Right cardiac atrium (tissue), 5 donors: ENCODE measurements at regions of chr10 and their contacts with region 1.

Region 1: DNA sequence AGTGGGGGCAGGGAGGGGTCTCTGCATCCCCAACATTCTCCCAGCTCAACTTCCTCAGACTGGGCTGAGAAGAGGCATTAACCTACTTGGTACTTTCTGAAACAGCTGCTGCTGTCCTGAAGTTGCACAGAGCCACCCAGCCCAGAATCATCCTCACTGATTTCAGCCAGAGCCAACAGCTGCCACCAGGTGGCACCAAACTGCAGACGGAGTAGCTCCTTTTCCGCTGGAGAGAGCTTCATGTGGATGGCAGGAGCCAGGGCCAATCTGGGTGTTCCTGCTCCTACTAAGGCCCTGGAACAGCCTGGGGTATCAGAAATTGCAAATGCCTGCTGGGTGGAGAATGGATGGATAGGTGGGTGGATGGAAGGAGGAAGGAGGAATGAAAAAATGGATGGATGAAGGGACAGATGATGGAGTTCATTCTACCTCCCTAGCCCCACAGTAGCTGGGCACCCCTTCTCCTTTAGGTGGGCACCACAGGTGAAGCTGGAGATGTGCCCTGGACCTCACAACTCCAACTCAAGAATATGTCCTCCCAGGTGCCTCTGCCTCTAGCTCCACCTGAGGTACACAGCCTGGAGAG is 11.8 kb upstream of the DRGX start:
- DNase-seq: peak; percentile 73 to 92 (median 90)
- ATAC-seq: peak in 1 of 2 donors; percentile 67
- H3K4me3 ChIP-seq: no peak overlapping the region
- H3K27ac ChIP-seq: no peak overlapping the region
- H3K4me1 ChIP-seq: no peaks in the 10 kb centered on the region
- H3K27me3 ChIP-seq: no peaks in the 10 kb centered on the region

Region 2: DNA sequence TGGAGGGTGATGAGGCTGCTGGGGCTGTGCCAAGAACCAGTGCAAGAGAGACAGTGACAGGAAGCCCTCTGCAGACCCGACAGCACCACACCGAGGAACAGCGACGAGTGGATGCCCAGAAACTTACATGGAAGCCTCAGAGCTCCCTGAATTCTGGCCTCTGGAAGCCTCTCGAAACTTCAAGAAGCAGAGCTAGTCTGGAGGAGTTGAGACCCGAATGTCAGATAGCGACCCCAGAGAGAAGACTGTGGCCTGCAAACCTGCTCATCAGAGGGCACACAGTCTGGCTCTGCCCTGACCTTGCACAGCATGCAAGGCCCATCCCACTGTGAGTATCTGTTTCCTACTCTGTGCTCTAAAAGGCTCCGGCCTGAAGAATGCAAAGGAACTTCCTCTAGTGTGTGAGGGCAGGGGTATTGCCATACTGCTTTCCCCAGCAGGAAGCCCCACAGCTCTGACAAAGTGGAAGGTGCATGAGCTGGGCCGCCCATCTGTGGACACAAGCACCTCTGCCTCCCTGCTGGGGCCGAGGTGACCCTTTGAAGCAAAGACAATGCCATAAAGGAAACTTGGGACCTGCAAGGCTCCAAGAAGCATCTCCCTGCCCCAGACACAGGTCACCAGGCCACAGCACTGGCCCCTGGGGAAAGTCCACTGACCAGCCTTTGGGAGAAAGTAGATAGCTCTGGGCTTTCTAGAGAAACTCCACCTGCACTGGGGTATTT is 119.1 kb before region 1 on chr10:
- intact Hi-C with region 1: no loop called
- DNase-seq: peak in 2 of 3 donors; percentile 73
- ATAC-seq: peak in 1 of 2 donors; percentile 36
- H3K4me3 ChIP-seq: no peak overlapping the region
- H3K27ac ChIP-seq: no peak overlapping the region
- H3K4me1 ChIP-seq: peaks cover 6% of the 10 kb centered on the region
- H3K27me3 ChIP-seq: no peaks in the 10 kb centered on the region

Region 3: GRCh38 chr10:49465736-49466135 is 58.1 kb after region 1 on chr10:
- intact Hi-C with region 1: loop called in 1 of 4 experiments (anchors 10 kb)
- DNase-seq: no peak
- ATAC-seq: no peak
- H3K4me3 ChIP-seq: no peak overlapping the region
- H3K27ac ChIP-seq: no peak overlapping the region
- H3K4me1 ChIP-seq: no peaks in the 10 kb centered on the region
- H3K27me3 ChIP-seq: no peaks in the 10 kb centered on the region

Region 4: DNA sequence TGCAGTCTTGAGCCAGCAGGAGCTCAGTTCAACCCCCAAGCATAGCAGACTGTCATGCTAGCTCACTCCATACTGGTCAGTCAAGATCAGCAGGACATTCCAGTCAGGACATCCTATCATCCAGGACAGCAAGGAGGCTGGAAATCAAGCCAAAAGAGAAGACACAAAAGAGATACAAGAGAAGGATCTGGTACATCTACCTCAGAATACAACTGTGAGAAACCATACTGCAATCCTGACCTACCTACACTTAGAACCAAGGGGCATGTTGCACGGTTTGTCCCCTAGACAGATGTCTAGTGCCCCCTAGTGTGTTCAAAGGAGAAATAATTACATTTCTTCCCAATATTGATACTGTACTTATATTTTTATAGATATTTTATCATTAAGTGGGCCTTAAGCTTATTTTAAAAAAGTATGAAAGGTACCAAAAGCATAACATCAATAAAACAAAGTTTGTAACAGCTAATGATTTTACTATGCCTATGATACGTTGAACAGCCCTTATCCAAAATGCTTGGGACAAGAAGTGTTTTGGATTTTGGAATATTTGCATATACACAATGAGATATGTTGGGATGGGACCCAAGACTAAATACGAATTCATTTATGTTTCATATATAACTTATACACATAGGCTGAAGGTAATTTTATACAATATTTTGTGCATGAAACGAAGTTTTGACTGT is 104.6 kb after region 1 on chr10:
- intact Hi-C with region 1: loop called in 3 of 4 experiments (anchors 5 to 10 kb)
- DNase-seq: no peak
- ATAC-seq: peak; percentile 37 to 38
- H3K4me3 ChIP-seq: no peak overlapping the region
- H3K27ac ChIP-seq: no peak overlapping the region
- H3K4me1 ChIP-seq: no peaks in the 10 kb centered on the region
- H3K27me3 ChIP-seq: no peaks in the 10 kb centered on the region

Region 5: DNA sequence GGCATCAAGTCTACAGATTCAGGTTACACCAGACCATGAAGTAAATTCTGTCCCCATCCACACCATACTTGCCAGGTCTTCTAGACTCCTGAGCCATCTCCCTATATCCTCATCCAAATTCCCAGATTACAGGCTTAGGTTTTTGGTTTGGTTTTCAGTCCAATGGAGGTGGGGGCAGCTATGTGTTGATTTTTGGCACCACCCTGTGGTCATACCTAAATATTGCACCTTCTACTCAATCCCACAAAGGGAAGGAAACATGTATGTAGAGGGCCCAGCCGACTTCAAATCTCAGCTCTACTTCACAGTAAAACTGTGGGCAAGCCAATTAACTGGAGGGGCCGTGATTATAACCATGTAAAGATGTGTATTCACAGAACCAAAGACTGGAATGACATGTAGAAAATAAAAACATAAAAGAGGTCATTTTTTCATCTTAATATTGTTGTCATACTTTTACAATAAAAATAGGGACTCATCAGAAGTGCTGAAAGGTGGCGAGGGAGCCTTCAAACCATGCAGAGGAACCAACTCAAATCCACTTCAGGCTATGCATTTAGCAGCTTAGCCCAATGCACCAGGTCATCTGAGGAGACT is 111.4 kb after region 1 on chr10:
- intact Hi-C with region 1: loop called (anchors 2 to 10 kb)
- DNase-seq: no peak
- ATAC-seq: peak; percentile 67 to 73
- H3K4me3 ChIP-seq: no peak overlapping the region
- H3K27ac ChIP-seq: no peak overlapping the region
- H3K4me1 ChIP-seq: no peaks in the 10 kb centered on the region
- H3K27me3 ChIP-seq: no peaks in the 10 kb centered on the region

Region 6: DNA sequence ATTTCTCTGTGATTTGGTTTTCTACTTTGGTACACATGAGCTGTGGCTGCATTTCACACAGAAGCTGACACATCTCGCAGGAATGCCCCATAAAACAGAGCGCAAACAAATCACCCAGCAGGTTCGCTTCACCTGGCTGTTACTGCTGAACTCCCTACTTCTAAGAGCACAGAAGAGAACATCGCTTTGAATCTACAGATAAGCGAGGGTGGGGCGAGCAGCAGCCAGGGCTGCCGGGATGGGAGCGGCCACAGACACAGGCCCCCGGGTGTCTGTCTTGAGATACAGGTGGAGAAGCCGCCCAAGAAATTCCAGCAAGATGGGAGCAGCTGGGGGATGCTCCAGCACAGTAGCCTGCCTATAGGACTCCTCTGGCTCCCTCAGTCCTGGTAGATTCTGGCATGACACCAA is 327.0 kb after region 1 on chr10:
- intact Hi-C with region 1: no loop called
- DNase-seq: no peak
- ATAC-seq: no peak
- H3K4me3 ChIP-seq: no peak overlapping the region
- H3K27ac ChIP-seq: no peak overlapping the region
- H3K4me1 ChIP-seq: no peaks in the 10 kb centered on the region
- H3K27me3 ChIP-seq: no peaks in the 10 kb centered on the region